Activated B cell treated with CpG ODN at 0.5 μM for 24 hours (primary cell): ENCODE measurements at regions of chr12 and their contacts with region 1.

Region 1: DNA sequence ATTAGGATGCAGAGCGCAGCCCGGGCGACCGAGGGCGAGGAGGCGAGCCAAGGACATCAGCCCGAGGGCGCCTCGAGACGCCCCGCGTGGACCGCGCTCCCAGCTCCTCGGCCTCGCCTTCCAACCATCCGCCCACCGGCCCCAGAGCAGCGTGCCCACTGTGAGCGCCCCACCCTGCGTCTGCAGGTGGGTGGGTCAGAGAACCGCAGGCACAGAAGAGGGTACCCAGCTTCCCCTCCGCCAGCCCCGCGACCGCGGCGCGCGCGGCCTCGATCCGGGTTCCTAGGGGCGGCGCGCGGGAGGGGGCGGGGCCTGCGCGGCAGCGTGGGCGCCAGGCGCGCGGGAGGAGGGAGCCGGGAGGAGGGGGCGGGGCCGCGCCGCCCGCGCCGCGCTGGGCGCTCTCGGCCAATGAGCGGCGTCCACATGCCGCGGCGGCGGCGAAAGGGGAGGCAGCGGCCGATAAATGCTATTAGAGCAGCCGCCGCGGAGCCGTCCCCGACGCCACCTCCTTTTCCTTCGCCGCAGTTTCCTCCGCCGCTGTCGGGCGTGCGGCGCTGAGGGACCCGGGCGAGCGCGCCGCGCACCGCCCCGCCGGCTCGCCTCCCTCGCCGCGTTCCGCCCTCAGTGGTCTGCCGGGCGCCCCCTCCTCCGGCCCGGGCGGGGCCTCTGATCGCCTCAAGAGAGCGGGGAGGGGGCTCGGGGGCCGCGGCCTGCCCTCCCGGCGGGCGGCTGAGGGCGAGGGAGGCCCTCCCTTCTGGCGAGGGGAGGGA is at the start of gene ATP2A2:
- DNase-seq: peak; percentile 91
- ATAC-seq: peak; percentile 84
- H3K4me3 Mint-ChIP-seq: peak within 1 kb of the TSS; percentile 96
- H3K27ac Mint-ChIP-seq: peak within 1 kb of the TSS; percentile 97
- H3K4me1 Mint-ChIP-seq: peaks cover 45% of the 10 kb centered on the region
- H3K27me3 Mint-ChIP-seq: no peaks in the 10 kb centered on the region
- CTCF ChIP-seq: no peak
- total RNA-seq, gene ATP2A2: 94.8 and 100 TPM in 2 replicates

Region 2: DNA sequence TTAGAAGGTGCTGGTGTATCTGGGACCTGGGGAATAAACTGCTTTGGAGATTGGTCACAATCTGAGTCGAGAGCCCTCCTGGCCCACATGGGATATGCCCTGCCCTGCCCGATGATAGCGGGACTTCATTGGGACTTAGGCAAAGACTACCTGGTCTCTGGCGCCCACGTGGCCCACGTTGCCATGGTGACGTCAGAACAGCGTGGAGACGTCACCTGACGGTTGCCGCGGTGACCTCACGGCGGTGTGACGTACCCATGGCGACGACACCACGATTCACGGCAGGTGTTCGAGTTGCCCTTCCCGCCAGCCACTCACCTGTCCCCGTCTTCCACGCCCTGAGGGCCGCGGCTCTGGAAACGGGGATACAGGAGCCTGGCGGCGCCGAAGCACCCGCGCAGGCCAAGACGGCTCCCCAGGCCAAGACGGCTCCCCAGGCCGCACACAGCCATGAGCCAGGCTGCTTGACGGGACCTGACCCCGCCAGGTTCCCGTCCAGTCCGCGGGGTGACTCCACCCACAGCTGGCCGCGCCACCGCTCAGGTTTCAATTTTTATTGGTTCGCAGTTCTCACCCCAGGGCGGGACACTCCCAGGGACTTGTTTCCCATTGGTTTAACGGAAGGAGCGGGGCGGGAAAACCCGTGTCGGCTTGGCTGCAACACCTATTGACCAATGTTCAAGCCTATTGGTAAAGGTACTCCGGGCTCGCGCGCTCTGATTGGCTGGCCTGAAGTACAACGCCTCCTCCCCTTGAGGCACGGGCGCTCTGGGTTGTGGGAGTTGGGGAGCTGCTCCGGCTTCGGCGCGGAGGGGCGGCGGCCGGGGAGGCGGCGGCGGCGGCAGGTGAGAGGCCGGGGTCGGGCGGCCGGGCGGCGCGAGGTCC is 707.7 kb before region 1 on chr12 and contains the starts of genes MMAB and MVK:
- CTCF ChIA-PET with region 1: no interaction called
- POLR2A ChIA-PET with region 1: no interaction called
- intact Hi-C with region 1: loop called (anchors 2 kb)
- DNase-seq: peak; percentile 92
- ATAC-seq: peak; percentile 94
- H3K4me3 Mint-ChIP-seq: peak within 1 kb of the TSS; percentile 93
- H3K27ac Mint-ChIP-seq: peak within 1 kb of the TSS; percentile 90
- H3K4me1 Mint-ChIP-seq: peaks cover 25% of the 10 kb centered on the region
- H3K27me3 Mint-ChIP-seq: no peaks in the 10 kb centered on the region
- CTCF ChIP-seq: no peak
- total RNA-seq, gene MMAB: 62.8 and 63.3 TPM in 2 replicates
- total RNA-seq, gene MVK: 28.5 and 30.3 TPM in 2 replicates

Region 3: DNA sequence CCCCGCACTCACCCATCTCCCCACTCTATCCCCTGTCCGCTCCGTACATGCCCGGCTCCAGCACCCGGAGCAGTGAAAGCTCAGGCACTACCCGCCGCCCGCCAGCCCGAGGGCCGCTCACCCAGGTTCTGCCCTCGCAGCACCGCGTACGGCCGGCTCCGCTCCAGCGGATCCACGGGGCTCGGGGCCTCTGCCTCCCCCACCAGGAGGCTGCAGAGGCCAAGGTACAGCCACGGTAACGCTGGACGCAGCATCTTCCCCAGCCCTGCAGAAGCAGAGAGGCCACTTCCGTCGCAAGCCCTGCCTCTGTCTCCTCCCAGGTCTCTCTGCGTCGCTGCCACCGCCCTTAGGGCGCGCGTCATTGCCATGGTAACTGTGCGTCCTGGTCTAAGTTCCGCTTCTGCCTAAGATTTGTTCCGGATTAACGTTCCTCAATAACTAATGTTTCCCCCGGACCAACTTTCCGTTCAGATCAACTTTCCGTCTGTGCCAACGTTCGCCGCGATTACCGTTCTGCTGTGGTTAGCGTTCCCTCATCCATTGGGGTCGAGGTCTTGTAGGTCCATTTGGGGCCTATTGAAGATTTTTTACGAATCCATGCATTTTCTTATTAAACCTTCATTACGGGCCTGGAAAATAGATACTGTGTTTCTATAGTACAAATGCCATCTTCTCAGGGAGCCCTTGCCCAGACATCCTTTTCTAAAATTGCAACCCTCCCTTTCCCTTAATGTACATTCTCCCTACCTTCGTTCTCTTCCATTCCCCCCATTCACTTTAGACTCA is 232.5 kb before region 1 on chr12 and contains the start of gene C12orf76:
- CTCF ChIA-PET with region 1: no interaction called
- POLR2A ChIA-PET with region 1: no interaction called
- intact Hi-C with region 1: loop called (anchors 1 kb)
- DNase-seq: peak; percentile 80
- ATAC-seq: peak; percentile 96
- H3K4me3 Mint-ChIP-seq: peak within 1 kb of the TSS; percentile 95
- H3K27ac Mint-ChIP-seq: peak within 1 kb of the TSS; percentile 100
- H3K4me1 Mint-ChIP-seq: peaks cover 52% of the 10 kb centered on the region
- H3K27me3 Mint-ChIP-seq: no peaks in the 10 kb centered on the region
- CTCF ChIP-seq: no peak
- total RNA-seq, gene C12orf76: 20.5 and 24.8 TPM in 2 replicates

Region 4: DNA sequence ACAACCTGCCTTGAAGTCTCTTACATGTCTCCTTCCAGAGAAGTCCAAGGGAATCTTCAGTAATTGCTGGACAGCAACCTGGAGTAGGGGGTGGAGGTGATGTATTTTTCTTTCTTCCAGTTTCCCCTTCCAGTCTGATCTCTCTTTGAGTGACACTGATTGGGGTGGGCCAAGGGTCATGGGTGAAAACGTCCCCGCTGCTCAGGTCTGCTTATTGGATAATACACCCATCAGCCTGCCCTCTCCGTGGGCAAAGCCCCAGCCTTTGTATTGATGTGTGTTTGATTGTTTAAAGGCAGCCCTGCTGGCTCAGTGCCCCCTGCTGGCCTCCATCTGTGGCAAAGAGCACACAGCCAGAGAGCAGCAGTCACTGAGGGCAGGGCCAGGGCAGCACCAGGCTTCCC is 35.6 kb before region 1 on chr12:
- CTCF ChIA-PET with region 1: no interaction called
- POLR2A ChIA-PET with region 1: interaction called, 4 read pairs
- intact Hi-C with region 1: loop called (anchors 1 kb)
- DNase-seq: peak; percentile 36
- ATAC-seq: peak; percentile 90
- H3K4me3 Mint-ChIP-seq: no peak overlapping the region
- H3K27ac Mint-ChIP-seq: no peak overlapping the region
- H3K4me1 Mint-ChIP-seq: peaks cover 8% of the 10 kb centered on the region
- H3K27me3 Mint-ChIP-seq: peaks cover 2% of the 10 kb centered on the region
- CTCF ChIP-seq: no peak

Region 5: GRCh38 chr12:110431957-110432587 is 151.1 kb after region 1 on chr12:
- CTCF ChIA-PET with region 1: interaction called, 3 read pairs
- POLR2A ChIA-PET with region 1: interaction called, 30 read pairs
- intact Hi-C with region 1: loop called (anchors 1 kb)
- DNase-seq: no peak
- ATAC-seq: no peak
- H3K4me3 Mint-ChIP-seq: no peak overlapping the region
- H3K27ac Mint-ChIP-seq: no peak overlapping the region
- H3K4me1 Mint-ChIP-seq: peaks cover 2% of the 10 kb centered on the region
- H3K27me3 Mint-ChIP-seq: no peaks in the 10 kb centered on the region
- CTCF ChIP-seq: no peak

Region 6: GRCh38 chr12:110600254-110600653 is 319.3 kb after region 1 on chr12:
- CTCF ChIA-PET with region 1: no interaction called
- POLR2A ChIA-PET with region 1: interaction called, 5 read pairs
- intact Hi-C with region 1: loop called (anchors 5 kb)
- DNase-seq: no peak
- ATAC-seq: peak; percentile 54
- H3K4me3 Mint-ChIP-seq: no peak overlapping the region
- H3K27ac Mint-ChIP-seq: peak overlapping the region; percentile 69
- H3K4me1 Mint-ChIP-seq: peaks cover 44% of the 10 kb centered on the region
- H3K27me3 Mint-ChIP-seq: no peaks in the 10 kb centered on the region
- CTCF ChIP-seq: no peak

Region 7: DNA sequence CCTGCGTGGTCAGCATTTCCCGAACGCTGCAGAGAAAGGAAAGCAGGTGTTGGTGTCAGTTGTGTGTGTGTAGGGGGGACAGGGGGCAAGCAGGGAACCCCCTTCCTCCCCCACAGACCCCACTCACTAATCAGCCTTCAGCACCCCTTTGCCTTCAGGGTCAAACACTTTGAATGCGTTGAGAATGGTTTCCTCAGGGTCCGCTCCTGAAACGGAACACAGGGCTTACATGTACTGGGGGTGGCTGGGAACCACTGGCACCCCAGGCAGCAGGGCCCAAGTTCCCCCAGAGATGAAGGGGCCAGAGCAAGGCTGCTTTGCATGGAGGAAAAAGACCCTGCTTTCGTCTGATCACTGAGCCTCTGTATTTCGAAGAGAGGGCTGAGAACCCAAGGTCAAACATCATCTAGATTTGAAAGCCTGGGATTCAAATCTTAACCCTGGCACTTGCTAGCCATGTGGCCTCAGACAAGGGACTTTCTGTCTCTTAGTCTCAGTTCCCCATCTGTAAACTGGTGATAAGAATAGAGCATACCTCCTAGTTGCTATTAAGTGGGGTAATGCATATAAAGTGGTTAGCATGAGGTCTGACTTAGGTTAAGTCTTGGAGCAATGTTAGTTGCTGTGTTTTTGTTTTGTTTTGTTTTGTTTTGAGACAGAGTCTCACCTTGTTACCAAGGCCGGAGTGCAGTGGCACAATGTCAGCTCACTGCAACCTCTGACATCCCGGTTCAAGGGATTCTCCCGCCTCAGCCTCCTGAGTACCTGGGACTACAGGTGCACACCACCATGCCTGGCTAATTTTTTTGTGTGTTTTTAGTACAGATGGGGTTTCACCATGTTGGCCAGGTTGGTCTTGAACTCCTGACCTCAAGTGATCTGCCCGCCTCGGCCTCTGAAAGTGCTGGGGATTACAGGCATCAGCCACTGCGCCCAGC is 632.4 kb after region 1 on chr12:
- CTCF ChIA-PET with region 1: no interaction called
- POLR2A ChIA-PET with region 1: no interaction called
- intact Hi-C with region 1: no loop called
- DNase-seq: peak; percentile 21
- ATAC-seq: peak; percentile 98
- H3K4me3 Mint-ChIP-seq: peak overlapping the region; percentile 51
- H3K27ac Mint-ChIP-seq: peak overlapping the region; percentile 90
- H3K4me1 Mint-ChIP-seq: peaks cover 35% of the 10 kb centered on the region
- H3K27me3 Mint-ChIP-seq: no peaks in the 10 kb centered on the region
- CTCF ChIP-seq: no peak

Region 8: GRCh38 chr12:111359231-111359913 is 1078.4 kb after region 1 on chr12:
- CTCF ChIA-PET with region 1: no interaction called
- POLR2A ChIA-PET with region 1: no interaction called
- intact Hi-C with region 1: loop called (anchors 5 kb)
- DNase-seq: no peak
- ATAC-seq: no peak
- H3K4me3 Mint-ChIP-seq: no peak overlapping the region
- H3K27ac Mint-ChIP-seq: peak overlapping the region; percentile 21
- H3K4me1 Mint-ChIP-seq: peaks cover 79% of the 10 kb centered on the region
- H3K27me3 Mint-ChIP-seq: no peaks in the 10 kb centered on the region
- CTCF ChIP-seq: no peak